ENCODE measurements at regions of chr11 and their contacts with region 1.

Region 1: GRCh38 chr11:67356864-67357561 is 3.7 kb upstream of the POLD4 start:
- DNase-seq: peak; percentile 87

Region 2: DNA sequence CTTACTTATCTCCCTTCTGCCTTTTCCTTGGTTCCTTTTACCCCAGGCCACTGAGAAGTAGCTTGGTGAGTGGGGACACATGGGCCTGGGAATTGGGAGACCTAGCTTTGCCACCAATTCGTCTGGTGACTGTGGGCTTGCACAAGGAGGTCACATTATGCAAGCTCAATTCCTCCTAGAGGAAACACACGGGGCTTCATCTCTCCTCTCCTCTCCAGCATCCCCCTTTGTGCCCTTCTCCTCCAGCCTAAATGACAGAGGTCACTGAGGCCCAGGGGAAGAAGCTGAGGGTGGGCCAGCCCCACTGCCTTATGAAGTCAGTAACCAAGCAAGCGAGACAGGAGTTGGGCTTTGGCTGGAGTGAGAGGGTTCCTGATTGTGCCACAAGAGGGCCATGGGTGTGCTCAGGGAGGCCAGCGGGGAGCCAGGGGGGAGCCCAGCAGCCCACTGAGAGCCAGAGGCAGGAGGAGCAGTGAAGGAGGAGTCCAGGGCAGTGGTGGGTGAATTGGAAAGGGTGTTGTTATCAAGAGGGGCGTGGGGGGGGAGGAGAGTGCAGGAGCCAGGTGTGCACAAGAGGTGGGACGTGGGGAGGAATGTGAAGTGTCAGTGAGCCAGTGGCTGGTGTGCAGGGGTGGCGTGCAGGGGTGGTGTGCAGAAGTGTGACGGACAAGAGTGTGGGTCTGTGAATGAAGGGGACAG is 14.3 kb after region 1 on chr11:
- intact Hi-C with region 1: loop called in 1 of 2 experiments (anchors 2 kb)
- DNase-seq: no peak

Region 3: DNA sequence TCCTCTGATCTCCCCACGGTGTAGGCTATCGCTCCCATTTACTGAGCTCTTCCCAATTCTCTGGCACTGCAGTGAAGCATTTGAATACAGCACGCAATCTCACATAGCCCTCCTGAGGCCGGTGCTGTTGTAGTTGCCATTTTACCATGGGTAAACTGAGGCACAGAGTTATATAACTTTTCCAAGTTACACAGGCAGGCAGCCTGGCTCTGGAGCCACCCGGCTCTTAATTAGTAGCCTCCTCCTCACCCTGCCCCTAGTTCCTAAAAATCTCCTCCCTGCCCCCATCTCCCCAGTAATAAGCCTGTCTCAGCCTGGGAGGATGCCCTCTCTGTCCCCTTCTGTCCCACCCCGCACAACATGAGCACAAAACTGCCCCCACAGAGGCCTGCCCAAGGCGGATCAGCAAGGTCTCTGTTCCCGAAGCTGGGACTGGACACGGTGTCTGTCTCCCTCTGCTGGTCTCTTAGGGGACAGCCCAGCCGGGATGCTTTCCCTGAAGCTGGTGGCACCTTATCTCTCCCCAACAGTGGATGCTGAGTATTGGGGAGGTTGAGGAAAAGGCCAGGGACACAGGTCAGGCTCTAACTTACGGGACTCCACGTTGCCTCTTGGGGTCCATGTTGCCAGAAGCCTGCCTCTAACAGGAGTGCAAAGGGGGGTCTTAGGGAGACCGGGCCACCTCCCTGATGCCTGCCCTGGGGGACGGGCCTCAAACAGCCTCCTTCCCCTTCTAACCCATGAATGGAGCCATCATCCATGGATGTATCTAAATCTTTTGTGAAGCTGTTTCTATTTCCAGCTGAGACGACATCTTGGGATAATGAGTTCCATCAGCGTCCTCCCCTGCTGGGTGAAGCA is 25.5 kb after region 1 on chr11:
- intact Hi-C with region 1: loop called (anchors 2 kb)
- DNase-seq: peak; percentile 95

Measured in posterior vena cava (tissue), 2 donors.